ENCODE measurements at regions of chr9 and their contacts with region 1.

Region 1: DNA sequence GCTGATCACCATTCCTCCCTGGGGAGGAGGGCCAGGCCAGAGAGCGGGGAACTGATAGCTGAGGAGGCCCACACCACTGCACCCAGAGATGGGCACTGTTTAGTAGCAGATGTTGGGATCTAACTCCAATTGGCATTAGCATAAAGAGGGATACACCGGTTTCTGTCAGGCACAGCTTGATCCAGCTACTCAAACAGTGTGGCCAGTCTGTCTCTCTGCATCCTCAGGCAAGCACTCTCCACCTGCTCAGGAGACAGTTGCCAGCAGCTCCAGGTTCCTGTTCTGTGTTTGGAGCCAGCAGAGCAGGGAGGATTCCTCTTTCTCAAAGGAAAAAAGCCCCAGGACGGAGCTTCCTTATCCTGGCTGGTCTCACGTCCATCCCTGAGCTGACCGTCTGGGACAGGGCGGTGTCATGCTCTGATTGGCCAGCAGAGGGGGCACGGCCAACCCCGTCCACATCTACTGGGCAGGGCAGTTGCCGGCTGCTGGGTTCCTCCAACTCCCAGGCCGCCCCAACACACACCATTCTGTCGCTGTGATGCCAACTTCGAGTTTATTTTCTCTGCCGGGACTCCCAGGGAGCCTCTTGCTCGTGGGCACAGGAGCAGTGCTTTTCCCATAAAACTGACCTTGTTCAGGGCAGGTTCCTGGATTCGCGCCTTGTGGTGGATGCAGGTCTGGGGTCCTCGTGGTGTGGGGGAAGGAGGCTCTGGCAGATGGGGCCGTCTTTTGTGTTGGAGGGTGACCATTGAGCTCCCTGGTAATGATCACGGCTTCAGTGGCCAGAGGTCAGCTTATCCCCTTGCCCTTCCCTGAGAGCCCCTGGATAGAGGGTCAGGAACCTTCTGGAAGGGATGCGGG is 47.9 kb downstream of the COL5A1 start:
- H3K4me3 ChIP-seq: no peak overlapping the region
- H3K27ac ChIP-seq: no peak overlapping the region
- H3K4me1 ChIP-seq: no peaks in the 10 kb centered on the region
- CTCF ChIP-seq: peak; percentile 67

Region 2: DNA sequence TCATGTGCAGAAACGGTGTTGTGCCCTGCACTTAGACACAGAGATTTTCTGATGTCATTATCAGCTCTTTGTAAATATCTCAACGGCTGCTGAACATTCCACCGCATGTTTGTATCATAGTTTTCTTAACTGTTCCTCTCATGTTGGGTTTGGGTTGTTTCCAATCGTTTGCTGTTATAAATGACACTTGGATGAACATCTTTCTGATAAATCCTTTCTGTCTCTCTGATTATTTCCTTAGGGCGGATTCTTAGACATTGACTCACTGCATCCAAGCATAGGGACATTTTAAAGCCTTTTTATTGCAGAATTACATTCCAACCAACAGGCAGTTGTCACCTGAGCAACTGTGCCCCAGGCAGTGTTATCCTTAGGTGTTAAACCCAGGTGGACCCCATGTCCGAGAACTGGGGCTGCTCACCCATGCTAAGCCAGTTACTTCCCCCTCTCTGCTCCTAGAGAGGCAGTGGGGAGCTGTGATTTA is 19.5 kb before region 1 on chr9:
- CTCF ChIA-PET with region 1: interaction called, 22 read pairs
- POLR2A ChIA-PET with region 1: no interaction called
- H3K4me3 ChIP-seq: no peak overlapping the region
- H3K27ac ChIP-seq: no peak overlapping the region
- H3K4me1 ChIP-seq: no peaks in the 10 kb centered on the region
- CTCF ChIP-seq: no peak

Measured in HEK293 (cell line).